Lower leg skin (tissue), 4 donors: ENCODE measurements at regions of chr12 and their contacts with region 1.

Region 1: DNA sequence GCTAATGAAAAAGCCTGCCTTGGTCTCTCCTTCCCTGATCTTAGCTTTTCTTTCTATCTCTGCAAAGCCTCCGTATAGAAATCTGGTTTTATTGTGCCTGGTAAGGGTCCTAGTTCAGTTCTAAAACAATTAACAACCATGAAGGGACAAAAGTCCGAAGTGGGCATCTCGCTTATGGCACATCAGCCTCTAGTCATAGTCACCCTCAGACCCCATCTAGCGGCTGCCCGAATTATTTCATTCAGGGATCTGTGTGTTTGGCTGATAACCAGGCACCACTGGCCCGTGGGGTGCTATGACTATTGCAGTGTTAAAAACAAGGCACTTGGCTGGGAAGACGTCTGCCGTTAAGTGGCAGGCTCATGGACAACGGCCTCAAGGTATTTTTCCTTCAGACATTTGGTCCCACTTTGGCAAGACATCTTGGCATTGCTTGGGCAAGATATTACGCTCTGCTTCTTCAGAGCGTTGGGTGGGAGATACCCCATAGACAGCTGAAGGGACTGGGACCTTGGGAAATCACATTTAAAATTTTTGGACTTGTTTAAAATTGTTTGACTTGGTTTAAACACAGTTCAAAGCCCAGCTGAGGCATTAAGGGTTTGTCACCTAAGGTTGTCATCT is 87.1 kb downstream of the SINHCAF start:
- DNase-seq: peak; percentile 59 to 87
- H3K4me3 ChIP-seq: no peak overlapping the region
- CTCF ChIP-seq: no peak
- POLR2A ChIP-seq: no peak

Region 2: DNA sequence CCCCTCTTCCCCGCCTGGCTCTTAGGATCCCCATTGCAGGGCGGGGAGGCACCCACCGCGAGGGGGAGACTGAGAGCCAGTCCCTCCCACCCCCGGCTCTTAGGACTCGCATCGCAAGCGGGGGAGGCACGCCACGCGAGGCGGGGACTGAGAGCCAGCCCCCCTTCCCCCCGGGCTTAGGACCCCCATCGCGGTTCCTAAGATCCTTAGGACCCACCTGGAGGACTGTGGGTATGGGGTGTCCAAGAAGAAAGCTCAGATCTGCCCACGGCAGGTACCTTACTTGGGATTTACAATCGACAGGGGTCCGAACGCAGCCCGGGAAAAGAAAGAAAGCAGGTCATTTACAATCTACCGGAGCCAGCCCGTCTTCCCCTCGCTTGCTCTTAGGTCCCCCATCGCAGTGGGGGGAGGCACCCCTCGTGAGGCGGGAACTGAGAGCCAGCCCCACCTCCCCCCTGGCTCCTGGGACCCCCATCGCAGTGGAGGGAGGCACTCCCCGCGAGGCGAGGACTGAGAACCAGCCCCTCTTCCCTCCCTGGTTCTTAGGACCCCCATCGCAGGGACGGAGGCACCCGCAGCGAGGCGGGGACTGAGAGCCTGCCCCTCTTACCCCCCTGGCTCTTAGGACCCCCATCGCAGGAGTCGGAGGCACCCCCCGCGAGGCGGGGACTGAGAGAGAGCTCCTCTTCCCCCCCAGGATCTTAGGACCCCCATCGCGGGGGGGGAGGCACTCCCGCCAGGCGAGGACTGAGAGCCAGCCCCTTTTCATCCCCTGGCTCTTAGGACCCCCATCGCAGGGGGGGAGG is 121.5 kb before region 1 on chr12:
- intact Hi-C with region 1: loop called (anchors 5 kb)
- DNase-seq: peak in 1 of 2 donors; percentile 76
- H3K4me3 ChIP-seq: peak overlapping the region; percentile 14
- CTCF ChIP-seq: no peak
- POLR2A ChIP-seq: no peak

Region 3: GRCh38 chr12:31220633-31221565 is 18.0 kb before region 1 on chr12:
- intact Hi-C with region 1: no loop called
- DNase-seq: no peak
- H3K4me3 ChIP-seq: no peak overlapping the region
- CTCF ChIP-seq: no peak
- POLR2A ChIP-seq: no peak